Posterior vena cava (tissue), 2 donors: ENCODE measurements at regions of chr12 and their contacts with region 1.

Region 1: DNA sequence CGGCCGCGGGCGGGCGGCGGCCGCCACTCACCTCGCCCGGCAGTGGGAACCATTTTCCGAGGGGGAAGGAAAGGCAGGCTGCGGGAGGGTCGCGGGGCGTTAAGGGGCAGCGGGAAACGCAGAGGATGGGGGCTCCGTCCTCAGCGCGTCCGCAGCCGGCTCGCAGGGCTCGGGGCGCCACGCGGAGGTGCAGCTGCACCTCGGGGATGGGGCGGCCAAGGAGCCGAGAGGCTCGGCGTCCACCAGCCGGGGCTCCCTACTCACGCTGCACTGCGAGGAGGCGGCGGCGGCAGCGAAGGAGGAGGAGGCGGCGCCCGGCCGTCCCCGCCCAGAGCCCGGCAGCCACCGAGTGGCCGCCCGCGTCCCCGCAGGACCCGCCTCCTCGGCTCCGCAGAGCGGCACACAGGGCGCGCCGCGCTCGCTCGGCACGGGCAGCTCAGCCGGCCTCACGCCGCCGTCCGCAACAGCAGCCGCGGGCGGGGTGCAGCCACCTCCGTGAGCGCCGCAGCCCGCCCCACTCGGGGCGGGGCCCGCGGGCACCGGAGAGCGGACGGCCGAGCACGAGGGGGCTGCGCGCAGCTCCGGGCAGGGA is at the start of gene ATP2B1:
- DNase-seq: peak; percentile 97
- total RNA-seq, gene ATP2B1: 37.6 to 44.0 TPM

Region 2: GRCh38 chr12:89733579-89734201 is 25.0 kb after region 1 on chr12:
- intact Hi-C with region 1: loop called in 1 of 2 experiments (anchors 1 kb)
- DNase-seq: no peak